T-cell (primary cell): ENCODE measurements at regions of chr19 and their contacts with region 1.

Region 1: DNA sequence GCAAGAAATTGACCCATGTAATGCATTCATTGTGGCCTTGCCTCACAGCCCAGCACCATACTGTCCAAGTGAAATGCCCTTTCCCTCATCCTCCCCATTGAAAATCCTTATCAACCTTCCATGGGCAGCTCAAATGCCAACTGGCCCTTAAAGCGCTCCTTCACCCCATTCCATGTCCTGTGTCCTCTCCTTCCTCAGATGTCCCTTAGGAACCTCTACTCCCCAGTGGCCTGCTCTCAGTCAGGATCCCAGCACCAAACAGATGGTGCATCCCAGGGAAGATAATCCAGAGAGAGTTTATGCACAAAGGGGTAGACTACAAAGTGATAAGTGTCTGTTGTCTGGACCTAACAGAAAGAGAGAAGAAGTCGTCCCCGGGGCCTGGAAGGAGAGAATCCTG is 407.4 kb upstream of the ZNF507 start:
- DNase-seq: no peak
- ATAC-seq: no peak
- H3K4me3 ChIP-seq: no peak overlapping the region
- H3K4me3 Mint-ChIP-seq: no peak overlapping the region
- H3K27ac ChIP-seq: no peak overlapping the region
- H3K27ac Mint-ChIP-seq: no peak overlapping the region
- H3K4me1 ChIP-seq: no peaks in the 10 kb centered on the region
- H3K4me1 Mint-ChIP-seq: no peaks in the 10 kb centered on the region
- H3K27me3 ChIP-seq: peaks cover 0 to 3% of the 10 kb centered on the region in 2 experiments
- H3K27me3 Mint-ChIP-seq: peaks cover 2 to 5% of the 10 kb centered on the region in 2 donors

Region 2: GRCh38 chr19:31066385-31066784 is 871.6 kb before region 1 on chr19:
- CTCF ChIA-PET with region 1: no interaction called
- POLR2A ChIA-PET with region 1: interaction called in 1 of 2 experiments, 14 read pairs
- DNase-seq: no peak
- ATAC-seq: no peak
- H3K4me3 ChIP-seq: no peak overlapping the region
- H3K4me3 Mint-ChIP-seq: no peak overlapping the region
- H3K27ac ChIP-seq: no peak overlapping the region
- H3K27ac Mint-ChIP-seq: no peak overlapping the region
- H3K4me1 ChIP-seq: no peaks in the 10 kb centered on the region
- H3K4me1 Mint-ChIP-seq: no peaks in the 10 kb centered on the region
- H3K27me3 ChIP-seq: peaks cover 0 to 20% of the 10 kb centered on the region in 2 experiments
- H3K27me3 Mint-ChIP-seq: peaks cover 15 to 16% of the 10 kb centered on the region in 2 donors

Region 3: GRCh38 chr19:31903979-31904378 is 34.0 kb before region 1 on chr19:
- CTCF ChIA-PET with region 1: no interaction called
- POLR2A ChIA-PET with region 1: no interaction called
- DNase-seq: no peak
- ATAC-seq: no peak
- H3K4me3 ChIP-seq: no peak overlapping the region
- H3K4me3 Mint-ChIP-seq: no peak overlapping the region
- H3K27ac ChIP-seq: no peak overlapping the region
- H3K27ac Mint-ChIP-seq: no peak overlapping the region
- H3K4me1 ChIP-seq: no peaks in the 10 kb centered on the region
- H3K4me1 Mint-ChIP-seq: peaks cover 0 to 3% (median 1%) of the 10 kb centered on the region in 3 donors
- H3K27me3 ChIP-seq: peaks cover 0 to 2% of the 10 kb centered on the region in 2 experiments
- H3K27me3 Mint-ChIP-seq: no peaks in the 10 kb centered on the region